ENCODE measurements at regions of chr6 and their contacts with region 1.

Region 1: DNA sequence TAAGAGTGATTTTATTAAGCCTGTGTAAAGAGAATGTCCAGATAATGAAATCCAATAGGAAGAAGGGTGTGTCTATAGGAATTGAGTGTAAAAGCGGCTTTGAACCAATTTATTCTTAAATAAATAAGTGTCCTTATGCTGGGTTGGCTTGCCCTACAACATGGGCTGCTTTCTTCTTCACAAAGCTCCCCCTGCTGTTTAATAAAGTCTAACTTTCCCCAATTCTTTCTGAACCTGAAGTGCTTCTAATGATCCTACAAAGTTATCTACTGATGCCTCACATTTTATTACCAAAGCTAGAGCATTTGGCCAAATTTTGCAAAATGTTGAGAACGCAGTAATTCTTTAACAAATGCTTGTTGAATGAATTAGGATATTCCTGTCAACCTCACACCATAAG is 36.3 kb upstream of the SIRT5 start:
- DNase-seq: no peak
- ATAC-seq: peak; percentile 73

Region 2: GRCh38 chr6:13336553-13336952 is 201.5 kb before region 1 on chr6:
- intact Hi-C with region 1: loop called (anchors 1 kb)
- DNase-seq: peak; percentile 85
- ATAC-seq: peak; percentile 76

Region 3: GRCh38 chr6:13508711-13509705 is 29.1 kb before region 1 on chr6:
- intact Hi-C with region 1: loop called (anchors 2 kb)
- DNase-seq: no peak
- ATAC-seq: peak; percentile 49

Measured in Right ventricle myocardium inferior (tissue), 1 donor.